ENCODE measurements at regions of chr1 and their contacts with region 1.

Region 1: GRCh38 chr1:25858906-25859789 is at the start of gene AUNIP:
- DNase-seq: peak; percentile 42
- ATAC-seq: peak; percentile 92
- H3K4me3 ChIP-seq: peak within 1 kb of the TSS; percentile 64 to 74
- H3K27ac ChIP-seq: peak within 1 kb of the TSS; percentile 98
- H3K4me1 ChIP-seq: peaks cover 15% of the 10 kb centered on the region; the same call in 1 of the 2 replicates
- H3K27me3 ChIP-seq: no peaks in the 10 kb centered on the region
- CTCF ChIP-seq: no peak
- total RNA-seq, gene AUNIP: 12.2 TPM

Region 2: GRCh38 chr1:25501235-25502058 is 357.7 kb before region 1 on chr1:
- CTCF ChIA-PET with region 1: interaction called, 12 read pairs
- POLR2A ChIA-PET with region 1: no interaction called
- in situ Hi-C with region 1: no loop called
- intact Hi-C with region 1: no loop called
- DNase-seq: peak; percentile 7
- ATAC-seq: no peak
- H3K4me3 ChIP-seq: no peak overlapping the region
- H3K27ac ChIP-seq: no peak overlapping the region
- H3K4me1 ChIP-seq: peaks cover 9% of the 10 kb centered on the region
- H3K27me3 ChIP-seq: no peaks in the 10 kb centered on the region
- CTCF ChIP-seq: peak; percentile 45